Brain microvascular endothelial cell (primary cell): ENCODE measurements at regions of chr3 and their contacts with region 1.

Region 1: DNA sequence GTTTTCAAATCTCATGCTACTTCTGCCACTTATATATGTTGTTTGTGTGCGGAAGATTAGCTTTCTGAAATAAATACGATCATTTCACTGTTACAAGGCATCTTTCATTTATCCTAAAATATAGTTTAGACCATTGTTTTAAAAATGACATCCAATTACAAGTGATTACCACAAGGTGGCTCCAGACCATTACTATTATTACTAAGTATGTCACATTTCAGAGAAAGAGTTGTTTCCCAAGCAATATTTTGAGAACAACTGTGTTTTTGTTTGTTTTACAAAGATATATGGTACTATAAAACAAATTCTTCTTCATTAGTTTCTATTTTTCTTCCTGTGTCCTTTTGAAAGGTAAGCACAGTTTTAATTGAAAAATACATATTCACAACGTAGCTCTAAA is 136.0 kb upstream of the RAP2B start:
- DNase-seq: no peak
- H3K4me3 ChIP-seq: no peak overlapping the region
- H3K27ac ChIP-seq: no peak overlapping the region
- H3K27me3 ChIP-seq: no peaks in the 10 kb centered on the region
- CTCF ChIP-seq: peak; percentile 29

Region 2: DNA sequence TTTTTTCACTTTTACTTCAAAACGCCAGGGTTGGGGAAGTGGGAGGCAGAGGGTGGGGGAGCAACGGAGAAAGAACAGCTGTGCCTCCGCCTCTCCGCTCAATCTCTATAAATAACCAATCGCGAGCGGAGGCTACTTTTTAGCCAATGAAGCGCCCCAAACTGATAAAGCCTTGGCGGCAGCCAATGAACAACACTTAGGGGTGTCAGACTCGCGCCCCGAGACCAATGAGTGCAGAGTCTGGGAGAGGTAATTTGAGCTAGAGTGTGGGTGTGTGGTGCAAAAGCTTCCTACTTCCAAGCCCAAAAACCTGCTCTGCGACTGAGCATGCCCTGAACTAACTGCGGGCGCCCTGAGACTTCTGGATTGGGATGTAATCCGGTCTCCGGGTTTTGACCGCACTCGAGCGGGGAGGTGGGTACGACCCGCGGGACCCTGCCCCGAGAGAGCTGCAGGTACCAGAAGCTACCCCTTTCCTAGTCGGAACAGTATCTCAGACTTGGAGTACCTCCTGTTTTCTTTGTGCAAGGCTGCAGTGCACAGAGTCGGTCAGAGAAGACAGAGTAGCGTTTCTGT is 135.2 kb after region 1 on chr3:
- in situ Hi-C with region 1: no loop called
- DNase-seq: peak; percentile 100
- H3K4me3 ChIP-seq: peak overlapping the region; percentile 95
- H3K27ac ChIP-seq: peak overlapping the region; percentile 79
- H3K27me3 ChIP-seq: no peaks in the 10 kb centered on the region
- CTCF ChIP-seq: no peak

Region 3: GRCh38 chr3:153595186-153595815 is 569.3 kb after region 1 on chr3:
- in situ Hi-C with region 1: loop called (anchors 25 kb)
- DNase-seq: peak; percentile 49
- H3K4me3 ChIP-seq: no peak overlapping the region
- H3K27ac ChIP-seq: no peak overlapping the region
- H3K27me3 ChIP-seq: no peaks in the 10 kb centered on the region
- CTCF ChIP-seq: peak; percentile 78